H1 (cell line): ENCODE measurements at regions of chr11 and their contacts with region 1.

Region 1: GRCh38 chr11:7665473-7666291 is 7.6 kb downstream of the CYB5R2 start:
- DNase-seq: peak in 1 of 2 experiments; percentile 90
- H3K4me3 ChIP-seq: no peak overlapping the region
- H3K27ac ChIP-seq: no peak overlapping the region
- H3K4me1 ChIP-seq: no peaks in the 10 kb centered on the region
- H3K27me3 ChIP-seq: no peaks in the 10 kb centered on the region
- CTCF ChIP-seq: peak; percentile 80 to 92 (median 87)
- EP300 ChIP-seq: no peak
- POLR2A ChIP-seq: no peak
- RAD21 ChIP-seq: peak; percentile 84 to 88

Region 2: DNA sequence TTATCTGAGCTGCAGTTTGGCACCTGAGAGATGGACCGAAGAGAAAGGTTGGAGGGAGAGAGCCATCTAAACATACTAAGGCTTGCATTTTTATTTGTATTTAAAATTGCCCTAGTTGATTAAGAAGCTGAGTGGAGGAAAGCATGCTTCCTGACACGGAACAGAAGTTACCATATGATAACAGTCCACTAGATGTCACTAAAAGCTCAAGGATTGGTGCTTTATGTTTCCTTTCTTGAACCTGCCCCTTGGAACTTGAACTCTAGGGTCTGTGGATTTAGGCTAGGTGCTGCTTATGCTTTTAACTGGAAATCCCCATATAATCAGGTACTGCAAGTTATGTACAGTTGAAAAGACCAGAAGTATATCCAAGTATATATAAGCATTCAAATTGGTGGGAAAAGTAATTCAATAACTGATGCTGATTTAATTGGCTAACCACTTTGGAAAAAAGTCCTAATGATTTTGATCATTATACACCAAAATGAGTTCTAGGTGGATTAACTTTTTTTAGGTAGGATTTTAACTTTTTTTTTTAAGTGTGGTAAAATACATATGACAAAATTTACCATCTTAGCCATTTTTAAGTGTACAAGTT is 567.3 kb before region 1 on chr11:
- CTCF ChIA-PET with region 1: interaction called, 13 read pairs
- POLR2A ChIA-PET with region 1: no interaction called
- DNase-seq: no peak
- H3K4me3 ChIP-seq: no peak overlapping the region
- H3K27ac ChIP-seq: no peak overlapping the region
- H3K4me1 ChIP-seq: no peaks in the 10 kb centered on the region
- H3K27me3 ChIP-seq: no peaks in the 10 kb centered on the region
- CTCF ChIP-seq: peak in 2 of 3 experiments; percentile 69 to 71; a peak in 3 of 4 replicates
- EP300 ChIP-seq: no peak
- POLR2A ChIP-seq: no peak
- RAD21 ChIP-seq: peak; percentile 94 to 97

Region 3: DNA sequence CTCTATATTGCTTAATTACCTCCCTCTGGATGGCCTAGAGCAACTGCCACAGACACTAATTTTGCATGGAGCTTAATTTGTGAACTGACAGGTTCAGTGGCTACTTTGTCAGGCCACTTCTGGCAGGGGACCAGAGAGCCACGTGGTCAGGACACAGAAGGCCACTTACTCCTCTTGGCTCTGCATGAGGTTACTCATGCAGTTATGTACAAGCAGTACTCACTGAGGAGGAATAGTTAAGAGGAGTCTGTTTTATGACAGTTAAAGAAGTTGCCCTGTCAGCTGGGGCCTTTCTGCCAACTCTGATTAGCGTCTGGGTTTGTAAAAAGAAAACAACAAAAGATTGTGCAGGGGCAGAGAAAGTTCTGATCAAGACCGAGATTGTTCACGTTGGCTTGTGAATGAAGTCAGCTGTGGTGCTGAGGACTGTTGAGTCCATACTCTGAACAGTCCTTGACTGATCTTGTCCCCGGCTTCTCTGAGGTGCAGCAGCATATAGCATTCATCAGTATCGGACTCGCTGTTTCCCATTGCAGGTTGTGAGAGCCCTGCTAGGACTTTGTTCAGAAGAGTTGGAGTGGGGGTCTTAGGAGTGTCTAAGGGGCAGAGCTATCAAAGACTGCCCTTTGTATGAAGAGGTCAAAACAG is 110.5 kb before region 1 on chr11:
- CTCF ChIA-PET with region 1: interaction called, 46 read pairs
- POLR2A ChIA-PET with region 1: no interaction called
- DNase-seq: no peak
- H3K4me3 ChIP-seq: no peak overlapping the region
- H3K27ac ChIP-seq: no peak overlapping the region
- H3K4me1 ChIP-seq: peaks cover 0 to 3% (median 0%) of the 10 kb centered on the region in 4 experiments; a peak in 2 of 7 replicates
- H3K27me3 ChIP-seq: no peaks in the 10 kb centered on the region
- CTCF ChIP-seq: no peak
- EP300 ChIP-seq: no peak
- POLR2A ChIP-seq: no peak
- RAD21 ChIP-seq: no peak

Region 4: DNA sequence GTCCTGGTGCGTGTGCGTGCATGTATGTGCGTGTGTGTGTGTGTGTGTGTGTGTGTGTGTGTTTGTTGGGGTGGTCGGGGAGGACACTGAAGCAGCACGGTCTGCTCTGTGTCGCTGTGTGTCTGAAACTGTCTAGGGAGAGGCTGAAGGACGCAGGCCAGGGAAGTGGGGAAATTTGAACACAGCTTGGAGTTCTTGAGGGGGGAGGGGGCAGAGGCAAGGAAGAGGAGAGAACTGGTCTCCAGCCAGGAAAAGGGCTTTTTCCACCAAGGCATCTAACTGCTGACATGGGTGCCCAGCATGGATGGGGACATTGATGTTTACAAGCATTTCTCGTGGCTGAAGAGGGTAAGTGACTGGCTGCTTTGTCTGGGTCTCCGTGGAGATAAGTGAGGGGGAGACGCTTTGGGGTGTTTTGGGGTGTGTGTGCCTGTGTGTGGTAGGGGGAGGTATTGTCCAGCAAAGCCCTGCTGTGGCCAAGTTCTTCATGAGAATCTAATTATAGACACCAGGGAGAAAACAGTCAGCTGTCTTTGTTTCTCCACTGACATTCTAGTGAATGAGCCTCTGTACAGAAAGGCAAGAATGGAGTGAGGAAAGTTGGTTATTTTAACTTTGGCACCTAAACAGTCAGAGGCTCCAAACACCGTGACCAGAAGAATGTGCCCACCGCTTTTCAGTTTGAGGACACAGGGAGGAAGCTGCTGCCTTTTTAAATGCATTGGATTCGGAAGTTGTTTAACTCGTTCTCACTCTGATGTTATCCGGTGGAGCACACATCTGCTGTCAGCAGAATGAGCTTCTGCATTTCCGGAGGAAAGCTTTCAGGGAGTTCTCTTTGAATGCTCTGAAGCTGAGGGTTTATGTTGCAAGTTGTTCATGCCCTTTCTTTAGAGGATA is 88.1 kb before region 1 on chr11:
- CTCF ChIA-PET with region 1: interaction called, 38 read pairs
- POLR2A ChIA-PET with region 1: interaction called, 3 read pairs
- DNase-seq: no peak
- H3K4me3 ChIP-seq: no peak overlapping the region
- H3K27ac ChIP-seq: peak overlapping the region; percentile 26; the same call in 1 of the 2 replicates
- H3K4me1 ChIP-seq: peaks cover 24 to 43% (median 33%) of the 10 kb centered on the region in 4 experiments
- H3K27me3 ChIP-seq: no peaks in the 10 kb centered on the region
- CTCF ChIP-seq: no peak
- EP300 ChIP-seq: no peak
- POLR2A ChIP-seq: no peak
- RAD21 ChIP-seq: no peak

Region 5: DNA sequence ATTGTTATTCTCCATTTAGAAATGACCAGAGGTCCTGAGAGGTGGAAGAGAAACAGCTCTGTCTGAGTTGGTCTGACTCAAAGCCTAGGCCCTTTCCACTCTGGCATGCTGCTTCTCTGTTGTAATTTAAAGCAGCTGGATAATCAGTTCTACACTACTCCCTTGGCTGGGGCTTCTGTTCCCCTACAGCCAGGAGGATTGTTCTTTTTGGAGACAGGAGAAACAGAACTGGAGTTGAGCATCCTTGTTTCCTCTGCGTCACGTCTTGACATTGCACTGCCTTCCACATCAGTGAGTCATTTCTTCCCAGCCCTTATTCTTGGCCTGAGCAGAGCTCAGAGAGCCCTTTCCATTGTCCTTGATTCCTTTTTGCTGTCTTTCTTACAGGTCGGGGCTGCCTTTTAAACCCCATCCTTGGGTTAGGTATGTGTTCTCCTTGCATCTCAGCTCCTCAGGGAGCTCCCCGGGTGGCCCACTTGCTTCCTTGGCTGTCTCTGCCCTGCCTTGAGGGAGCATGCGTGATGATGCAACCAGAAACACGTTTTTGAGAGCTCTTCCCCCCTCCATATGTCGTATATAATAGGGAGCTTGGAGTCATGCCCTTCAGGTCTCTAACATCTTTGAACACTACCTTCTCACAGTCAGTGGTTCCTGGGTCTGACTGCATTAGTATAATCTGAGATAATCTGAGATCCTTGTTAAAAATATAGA is 28.1 kb before region 1 on chr11:
- CTCF ChIA-PET with region 1: interaction called, 11 read pairs
- POLR2A ChIA-PET with region 1: no interaction called
- DNase-seq: no peak
- H3K4me3 ChIP-seq: no peak overlapping the region
- H3K27ac ChIP-seq: no peak overlapping the region
- H3K4me1 ChIP-seq: no peaks in the 10 kb centered on the region
- H3K27me3 ChIP-seq: no peaks in the 10 kb centered on the region
- CTCF ChIP-seq: no peak
- EP300 ChIP-seq: no peak
- POLR2A ChIP-seq: no peak
- RAD21 ChIP-seq: no peak

Region 6: DNA sequence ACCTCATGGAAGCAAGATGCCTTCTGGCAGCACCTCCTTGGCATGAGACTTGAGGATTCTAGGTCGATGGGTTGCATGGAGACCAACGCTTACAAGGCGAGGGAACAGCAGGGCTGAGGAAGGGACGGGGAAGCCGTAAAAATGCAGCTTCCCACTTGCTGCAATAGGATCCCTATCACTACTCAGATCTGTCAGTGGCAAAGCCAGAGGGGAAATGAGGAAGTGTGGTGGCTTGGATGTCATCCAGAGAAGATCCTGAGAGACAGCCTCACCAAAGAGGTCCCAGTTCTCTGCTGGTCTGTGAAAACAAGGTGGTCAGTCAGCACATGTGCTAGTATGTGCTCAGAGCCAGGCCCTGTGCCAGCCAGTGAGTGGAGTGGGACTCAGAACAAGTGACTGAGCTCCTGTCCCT is 14.5 kb before region 1 on chr11:
- CTCF ChIA-PET with region 1: interaction called, 43 read pairs
- POLR2A ChIA-PET with region 1: no interaction called
- DNase-seq: no peak
- H3K4me3 ChIP-seq: no peak overlapping the region
- H3K27ac ChIP-seq: no peak overlapping the region
- H3K4me1 ChIP-seq: no peaks in the 10 kb centered on the region
- H3K27me3 ChIP-seq: peaks cover 0 to 1% (median 0%) of the 10 kb centered on the region in 4 experiments; a peak in 1 of 7 replicates
- CTCF ChIP-seq: no peak
- EP300 ChIP-seq: no peak
- POLR2A ChIP-seq: no peak
- RAD21 ChIP-seq: no peak

Region 7: DNA sequence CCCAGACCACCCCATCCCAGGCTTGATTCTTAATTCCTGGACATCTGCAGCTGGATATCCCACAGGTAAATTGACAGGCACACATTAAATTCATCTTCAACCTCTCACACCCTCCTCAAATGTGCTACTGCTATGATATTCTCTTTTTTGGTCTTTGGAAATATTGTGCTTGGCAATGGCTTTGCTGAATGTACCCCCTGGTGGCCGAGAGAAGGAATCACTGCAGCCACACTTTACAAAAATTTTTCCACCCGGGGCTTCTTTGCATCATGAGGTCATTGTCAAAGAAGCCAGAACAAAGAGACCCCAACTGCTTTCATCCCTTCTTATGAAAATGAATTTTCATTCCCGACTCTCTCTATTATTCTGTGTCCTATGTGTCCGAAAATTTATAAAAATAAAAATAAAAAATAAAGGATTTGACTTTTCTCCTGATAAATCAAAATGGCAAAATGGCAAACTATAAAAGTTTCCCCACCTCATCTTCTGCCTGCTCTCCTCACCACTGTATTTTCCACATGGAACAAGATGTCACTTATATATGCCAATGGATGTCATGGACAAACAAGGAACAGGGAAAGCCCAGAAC is 22.6 kb after region 1 on chr11:
- CTCF ChIA-PET with region 1: interaction called, 34 read pairs
- POLR2A ChIA-PET with region 1: no interaction called
- DNase-seq: no peak
- H3K4me3 ChIP-seq: no peak overlapping the region
- H3K27ac ChIP-seq: no peak overlapping the region
- H3K4me1 ChIP-seq: peaks cover 0 to 4% (median under 1%) of the 10 kb centered on the region in 4 experiments; a peak in 2 of 7 replicates
- H3K27me3 ChIP-seq: no peaks in the 10 kb centered on the region
- CTCF ChIP-seq: peak; percentile 26 to 63 (median 60)
- EP300 ChIP-seq: no peak
- POLR2A ChIP-seq: no peak
- RAD21 ChIP-seq: peak; percentile 61 to 67